Activated T-helper 2 cell treated with anti-CD3 and anti-CD28 coated beads, Interferon-gamma antibody, Interleukin-2, Interleukin-4, amounts not matched to agents 10 μg/mL and 5 μg/mL and 100 μg/mL, durations not matched to agents 14 hours and 24 hours and 36 hours (primary cell): ENCODE measurements at regions of chr1 and their contacts with region 1.

Region 1: GRCh38 chr1:39816415-39817090 is 27.9 kb upstream of the BMP8B start:
- DNase-seq: peak; percentile 44
- H3K4me3 Mint-ChIP-seq: no peak overlapping the region
- H3K27ac Mint-ChIP-seq: no peak overlapping the region
- H3K4me1 Mint-ChIP-seq: peaks cover 10% of the 10 kb centered on the region
- H3K27me3 Mint-ChIP-seq: peaks cover 26% of the 10 kb centered on the region

Region 2: DNA sequence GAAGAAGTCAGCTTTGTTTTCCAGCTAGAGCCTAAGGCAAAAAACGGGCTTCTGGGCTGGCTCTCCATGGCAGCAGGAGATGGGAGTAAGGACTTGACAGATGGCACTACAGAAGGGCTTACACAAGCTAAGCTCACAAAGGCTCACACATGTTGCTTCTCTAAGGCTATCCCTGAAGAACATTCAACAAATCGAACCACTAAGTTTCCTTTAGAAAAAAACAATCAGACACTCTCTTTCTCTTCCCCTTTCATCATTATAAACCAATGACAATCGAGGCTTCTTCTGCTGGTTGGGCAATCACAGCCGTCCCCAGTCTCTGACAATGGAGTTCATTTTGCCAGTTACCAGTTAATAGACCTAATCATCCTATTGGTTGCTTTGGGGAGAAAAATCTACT is 26.3 kb after region 1 on chr1:
- intact Hi-C with region 1: no loop called
- DNase-seq: no peak
- H3K4me3 Mint-ChIP-seq: no peak overlapping the region
- H3K27ac Mint-ChIP-seq: no peak overlapping the region
- H3K4me1 Mint-ChIP-seq: peaks cover 38% of the 10 kb centered on the region
- H3K27me3 Mint-ChIP-seq: no peaks in the 10 kb centered on the region

Region 3: DNA sequence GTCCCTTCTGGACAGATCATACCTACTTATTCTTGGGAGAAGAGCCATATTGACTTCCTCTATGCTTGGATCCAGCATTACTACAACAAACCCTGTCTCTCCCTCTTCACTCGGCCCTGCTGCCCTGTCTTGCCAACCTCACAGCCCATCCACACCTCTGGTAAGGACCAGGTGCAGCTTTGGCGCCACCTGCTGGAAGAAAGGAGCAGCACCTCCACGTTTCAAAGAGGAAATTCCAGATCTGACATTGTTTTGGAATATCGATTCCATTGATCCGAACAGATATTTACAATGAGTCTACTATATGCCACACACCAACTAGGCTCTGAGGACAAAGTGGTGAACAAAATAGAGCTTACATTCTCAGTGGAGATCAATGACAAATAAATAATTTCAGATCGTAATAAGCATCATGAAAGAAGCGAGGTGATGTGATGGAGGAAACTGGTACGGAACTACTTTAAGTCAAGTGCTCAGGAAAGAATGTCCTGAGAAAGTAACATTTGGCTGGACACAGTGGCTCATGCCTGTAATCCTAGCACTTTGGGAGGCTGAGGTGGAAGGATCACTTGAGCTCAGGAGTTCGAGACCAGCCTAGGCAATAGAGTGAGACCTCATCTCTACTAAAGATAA is 157.1 kb after region 1 on chr1:
- intact Hi-C with region 1: loop called (anchors 1 kb)
- DNase-seq: peak; percentile 50
- H3K4me3 Mint-ChIP-seq: no peak overlapping the region
- H3K27ac Mint-ChIP-seq: no peak overlapping the region
- H3K4me1 Mint-ChIP-seq: peaks cover 5% of the 10 kb centered on the region
- H3K27me3 Mint-ChIP-seq: peaks cover 2% of the 10 kb centered on the region